T-cell (primary cell): ENCODE measurements at regions of chr19 and their contacts with region 1.

Region 1: DNA sequence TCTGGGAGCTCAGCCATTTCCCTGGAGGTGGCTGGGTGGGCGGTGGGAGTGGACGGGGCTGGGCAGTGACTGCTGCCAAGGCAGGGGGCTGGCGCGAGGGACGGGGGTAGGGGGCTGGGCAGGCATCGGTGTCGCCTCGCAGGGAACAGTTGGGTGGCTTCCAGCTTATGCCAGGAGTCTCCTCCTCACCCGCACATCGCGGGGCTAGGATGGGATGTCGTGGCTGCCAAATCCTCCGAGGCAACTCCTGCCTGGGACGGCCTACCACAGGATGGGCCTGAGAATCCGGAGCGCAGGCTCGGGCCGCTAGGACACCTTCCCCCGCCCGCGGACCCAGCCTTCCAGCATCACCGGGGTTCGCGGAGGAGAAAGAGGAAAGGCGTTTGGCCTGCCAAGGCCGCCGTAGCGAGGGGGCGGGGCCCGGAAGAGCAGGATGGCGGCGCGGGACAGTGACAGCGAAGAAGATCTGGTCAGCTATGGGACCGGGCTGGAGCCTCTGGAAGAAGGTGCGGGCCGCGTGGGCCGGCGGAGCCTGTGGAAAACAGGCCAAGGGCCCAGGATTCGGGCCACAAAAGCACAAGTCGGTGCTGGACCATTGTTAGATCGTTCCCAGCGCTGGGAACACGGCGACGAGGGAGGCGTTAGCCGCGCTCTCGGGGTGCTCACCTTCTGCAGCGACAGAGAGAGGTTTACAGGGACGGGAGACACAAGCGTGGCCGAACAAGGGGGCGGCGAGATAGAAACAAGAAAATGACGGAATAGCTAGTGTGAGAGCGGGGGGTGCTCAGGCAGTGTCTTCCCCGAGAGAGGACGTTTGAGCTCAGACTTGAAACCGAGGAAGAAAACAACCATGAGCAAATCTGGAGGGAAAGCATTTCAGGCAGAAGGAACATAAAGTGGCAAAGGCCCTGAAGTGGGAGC is at the start of gene GPATCH1:
- DNase-seq: peak; percentile 56 to 89 (median 78)
- ATAC-seq: peak; percentile 96 to 98 (median 97)
- H3K4me3 ChIP-seq: peak within 1 kb of the TSS; percentile 84 to 98
- H3K4me3 Mint-ChIP-seq: peak within 1 kb of the TSS; percentile 92 to 100 (median 98)
- H3K27ac ChIP-seq: peak within 1 kb of the TSS; percentile 59
- H3K27ac Mint-ChIP-seq: peak within 1 kb of the TSS; percentile 92 to 95
- H3K4me1 ChIP-seq: peaks cover 5 to 23% of the 10 kb centered on the region in 2 experiments
- H3K4me1 Mint-ChIP-seq: peaks cover 16 to 37% (median 30%) of the 10 kb centered on the region in 3 donors
- H3K27me3 ChIP-seq: peaks cover 0 to 3% of the 10 kb centered on the region in 2 experiments
- H3K27me3 Mint-ChIP-seq: no peaks in the 10 kb centered on the region
- total RNA-seq, gene GPATCH1: 11.8 to 17.6 (median 14.3) TPM

Region 2: GRCh38 chr19:32877977-32878745 is 202.9 kb before region 1 on chr19:
- CTCF ChIA-PET with region 1: interaction called in 1 of 2 experiments, 16 read pairs
- POLR2A ChIA-PET with region 1: no interaction called
- DNase-seq: no peak
- ATAC-seq: no peak
- H3K4me3 ChIP-seq: no peak overlapping the region
- H3K4me3 Mint-ChIP-seq: no peak overlapping the region
- H3K27ac ChIP-seq: no peak overlapping the region
- H3K27ac Mint-ChIP-seq: no peak overlapping the region
- H3K4me1 ChIP-seq: no peaks in the 10 kb centered on the region
- H3K4me1 Mint-ChIP-seq: peaks cover 0 to 5% (median 0%) of the 10 kb centered on the region in 3 donors
- H3K27me3 ChIP-seq: no peaks in the 10 kb centered on the region
- H3K27me3 Mint-ChIP-seq: no peaks in the 10 kb centered on the region

Region 3: GRCh38 chr19:33064792-33065550 is 16.1 kb before region 1 on chr19 and contains the start of gene RHPN2:
- CTCF ChIA-PET with region 1: no interaction called
- POLR2A ChIA-PET with region 1: no interaction called
- DNase-seq: peak in 16 of 35 experiments; percentile 1 to 48 (median 10)
- ATAC-seq: peak; percentile 73 to 87 (median 80)
- H3K4me3 ChIP-seq: peak within 1 kb of the TSS in 1 of 2 donors; percentile 47
- H3K4me3 Mint-ChIP-seq: peak within 1 kb of the TSS; percentile 60 to 72 (median 66)
- H3K27ac ChIP-seq: no peak within 1 kb of the TSS
- H3K27ac Mint-ChIP-seq: no peak within 1 kb of the TSS
- H3K4me1 ChIP-seq: peaks cover 0 to 18% of the 10 kb centered on the region in 2 experiments
- H3K4me1 Mint-ChIP-seq: peaks cover 0 to 5% (median 5%) of the 10 kb centered on the region in 3 donors
- H3K27me3 ChIP-seq: peaks cover 4 to 59% of the 10 kb centered on the region in 2 experiments
- H3K27me3 Mint-ChIP-seq: peaks cover 18 to 39% of the 10 kb centered on the region in 2 donors
- total RNA-seq, gene RHPN2: 0.16 to 0.66 (median 0.33) TPM